A673 (cell line): ENCODE measurements at regions of chr3 and their contacts with region 1.

Region 1: GRCh38 chr3:134339331-134339730 is 34.9 kb downstream of the AMOTL2 start:
- DNase-seq: no peak
- H3K4me3 ChIP-seq: no peak overlapping the region
- H3K27ac ChIP-seq: no peak overlapping the region
- H3K4me1 ChIP-seq: peaks cover 3% of the 10 kb centered on the region
- H3K27me3 ChIP-seq: no peaks in the 10 kb centered on the region
- CTCF ChIP-seq: no peak

Region 2: DNA sequence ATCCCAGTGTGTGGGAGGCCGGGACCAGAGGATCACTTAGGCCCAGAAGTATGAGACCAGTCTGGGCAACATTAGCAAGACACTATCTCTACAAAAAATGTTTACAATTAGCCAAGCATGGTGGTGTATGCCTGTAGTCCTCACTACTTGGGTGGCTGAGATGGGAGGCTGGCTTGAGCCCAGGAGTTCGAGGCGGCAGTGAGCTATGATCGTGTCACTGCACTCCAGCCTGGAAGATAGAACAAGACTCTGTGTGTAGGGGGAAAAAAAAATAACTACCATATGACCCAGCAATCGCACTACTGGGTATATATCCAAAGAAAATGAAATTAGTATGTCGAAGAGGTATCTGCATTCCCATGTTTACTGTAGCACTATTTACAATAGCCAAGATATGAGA is 111.3 kb before region 1 on chr3:
- CTCF ChIA-PET with region 1: interaction called, 13 read pairs
- POLR2A ChIA-PET with region 1: no interaction called
- intact Hi-C with region 1: no loop called
- DNase-seq: no peak
- H3K4me3 ChIP-seq: no peak overlapping the region
- H3K27ac ChIP-seq: no peak overlapping the region
- H3K4me1 ChIP-seq: peaks cover 24% of the 10 kb centered on the region
- H3K27me3 ChIP-seq: no peaks in the 10 kb centered on the region
- CTCF ChIP-seq: no peak

Region 3: GRCh38 chr3:134473868-134474546 is 134.7 kb after region 1 on chr3:
- CTCF ChIA-PET with region 1: no interaction called
- POLR2A ChIA-PET with region 1: no interaction called
- intact Hi-C with region 1: no loop called
- DNase-seq: peak; percentile 81
- H3K4me3 ChIP-seq: no peak overlapping the region
- H3K27ac ChIP-seq: no peak overlapping the region
- H3K4me1 ChIP-seq: no peaks in the 10 kb centered on the region
- H3K27me3 ChIP-seq: no peaks in the 10 kb centered on the region
- CTCF ChIP-seq: peak; percentile 81